ENCODE measurements at regions of chr1 and their contacts with region 1.

Region 1: DNA sequence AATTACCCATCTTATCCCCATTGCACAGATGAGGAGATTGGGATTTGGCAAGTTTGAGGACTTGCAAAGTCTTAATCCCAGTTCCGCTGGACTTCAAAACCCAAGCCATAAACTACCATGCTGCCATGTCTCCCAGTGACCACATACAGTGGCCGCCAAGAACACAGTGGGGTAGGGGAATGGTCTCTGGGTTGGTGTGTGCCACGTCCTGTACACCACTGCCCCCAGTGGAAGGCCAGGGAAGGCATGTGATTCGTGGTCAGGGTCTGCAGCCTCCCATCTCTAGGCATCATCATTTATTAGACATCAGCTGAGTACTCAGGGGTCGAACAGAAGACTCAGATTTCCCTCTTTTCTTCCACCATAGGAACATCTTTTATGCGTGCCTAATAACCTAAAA is 76.0 kb downstream of the MAN1C1 start:
- DNase-seq: no peak
- ATAC-seq: peak; percentile 88
- H3K4me3 ChIP-seq: no peak overlapping the region
- H3K27ac ChIP-seq: no peak overlapping the region
- H3K4me1 ChIP-seq: no peaks in the 10 kb centered on the region
- H3K27me3 ChIP-seq: peaks cover 4 to 15% of the 10 kb centered on the region in 2 experiments
- CTCF ChIP-seq: peak; percentile 46 to 72 (median 67)
- EP300 ChIP-seq: no peak
- POLR2A ChIP-seq: no peak
- RAD21 ChIP-seq: peak; percentile 58

Region 2: GRCh38 chr1:25503551-25504426 is 188.8 kb before region 1 on chr1:
- CTCF ChIA-PET with region 1: interaction called, 10 read pairs
- POLR2A ChIA-PET with region 1: no interaction called
- RAD21 ChIA-PET with region 1: interaction called, 4 read pairs
- SMC1A ChIA-PET with region 1: interaction called, 4 read pairs
- in situ Hi-C with region 1: no loop called
- intact Hi-C with region 1: no loop called
- DNase-seq: no peak
- ATAC-seq: peak; percentile 98
- H3K4me3 ChIP-seq: no peak overlapping the region
- H3K27ac ChIP-seq: no peak overlapping the region
- H3K4me1 ChIP-seq: no peaks in the 10 kb centered on the region
- H3K27me3 ChIP-seq: no peaks in the 10 kb centered on the region
- CTCF ChIP-seq: peak; percentile 56 to 72 (median 71)
- EP300 ChIP-seq: no peak
- POLR2A ChIP-seq: no peak
- RAD21 ChIP-seq: peak; percentile 40; the same call in 1 of the 2 replicates

Region 3: DNA sequence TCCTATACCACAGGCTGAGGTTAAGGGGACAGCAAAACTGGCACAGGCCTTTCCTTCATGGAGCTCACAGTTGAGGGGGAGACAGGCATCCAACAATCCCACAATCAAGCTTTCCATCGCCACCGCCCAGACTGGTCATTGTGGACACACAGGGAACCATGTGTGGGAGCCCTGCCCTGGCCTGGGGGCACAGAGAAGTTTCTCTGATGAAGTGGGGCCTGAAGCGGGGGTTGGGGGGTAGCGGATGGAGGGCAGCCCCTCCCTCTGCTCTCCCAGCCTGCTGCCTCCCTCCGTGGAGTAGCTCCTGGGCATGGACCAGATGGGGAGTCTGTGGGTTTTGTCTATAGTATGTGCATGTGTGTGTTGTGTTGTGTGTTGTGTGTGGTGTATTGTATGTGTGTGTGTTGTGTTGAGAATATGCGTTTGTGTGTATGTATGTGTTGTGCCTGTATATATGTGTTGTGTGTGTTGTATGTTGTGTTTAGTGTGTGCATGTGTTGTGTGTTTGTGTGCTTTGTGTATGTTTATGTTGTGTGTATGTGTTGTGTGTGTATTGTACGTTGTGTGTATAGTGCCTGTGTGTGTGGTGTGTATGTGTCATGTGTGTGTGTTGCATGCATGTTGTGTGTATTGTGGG is 163.6 kb before region 1 on chr1:
- CTCF ChIA-PET with region 1: no interaction called
- POLR2A ChIA-PET with region 1: no interaction called
- RAD21 ChIA-PET with region 1: no interaction called
- SMC1A ChIA-PET with region 1: no interaction called
- in situ Hi-C with region 1: no loop called
- intact Hi-C with region 1: no loop called
- DNase-seq: no peak
- ATAC-seq: no peak
- H3K4me3 ChIP-seq: no peak overlapping the region
- H3K27ac ChIP-seq: no peak overlapping the region
- H3K4me1 ChIP-seq: no peaks in the 10 kb centered on the region
- H3K27me3 ChIP-seq: no peaks in the 10 kb centered on the region; a peak in 1 of 4 replicates
- CTCF ChIP-seq: no peak
- EP300 ChIP-seq: no peak
- POLR2A ChIP-seq: no peak
- RAD21 ChIP-seq: no peak

Measured in GM12878 (cell line).